Calu3 (cell line): ENCODE measurements at regions of chr9 and their contacts with region 1.

Region 1: GRCh38 chr9:88092797-88093331 is 45.4 kb downstream of the SPATA31C2 start:
- DNase-seq: no peak
- H3K4me3 Mint-ChIP-seq: no peak overlapping the region
- H3K27ac Mint-ChIP-seq: no peak overlapping the region
- H3K4me1 Mint-ChIP-seq: no peaks in the 10 kb centered on the region
- H3K27me3 Mint-ChIP-seq: no peaks in the 10 kb centered on the region
- CTCF ChIP-seq: no peak

Region 2: GRCh38 chr9:87834357-87834756 is 258.5 kb before region 1 on chr9:
- CTCF ChIA-PET with region 1: no interaction called
- intact Hi-C with region 1: no loop called
- DNase-seq: peak; percentile 74
- H3K4me3 Mint-ChIP-seq: peak overlapping the region; percentile 46
- H3K27ac Mint-ChIP-seq: no peak overlapping the region
- H3K4me1 Mint-ChIP-seq: no peaks in the 10 kb centered on the region
- H3K27me3 Mint-ChIP-seq: no peaks in the 10 kb centered on the region
- CTCF ChIP-seq: peak; percentile 59

Region 3: GRCh38 chr9:88072851-88073365 is 20.0 kb before region 1 on chr9:
- CTCF ChIA-PET with region 1: interaction called, 4 read pairs
- intact Hi-C with region 1: loop called (anchors 2 kb)
- DNase-seq: no peak
- H3K4me3 Mint-ChIP-seq: no peak overlapping the region
- H3K27ac Mint-ChIP-seq: no peak overlapping the region
- H3K4me1 Mint-ChIP-seq: peaks cover 21% of the 10 kb centered on the region
- H3K27me3 Mint-ChIP-seq: no peaks in the 10 kb centered on the region
- CTCF ChIP-seq: no peak

Region 4: GRCh38 chr9:88280816-88281382 is 188.0 kb after region 1 on chr9:
- CTCF ChIA-PET with region 1: no interaction called
- intact Hi-C with region 1: no loop called
- DNase-seq: peak; percentile 16
- H3K4me3 Mint-ChIP-seq: no peak overlapping the region
- H3K27ac Mint-ChIP-seq: peak overlapping the region; percentile 29
- H3K4me1 Mint-ChIP-seq: peaks cover 15% of the 10 kb centered on the region
- H3K27me3 Mint-ChIP-seq: no peaks in the 10 kb centered on the region
- CTCF ChIP-seq: no peak

Region 5: DNA sequence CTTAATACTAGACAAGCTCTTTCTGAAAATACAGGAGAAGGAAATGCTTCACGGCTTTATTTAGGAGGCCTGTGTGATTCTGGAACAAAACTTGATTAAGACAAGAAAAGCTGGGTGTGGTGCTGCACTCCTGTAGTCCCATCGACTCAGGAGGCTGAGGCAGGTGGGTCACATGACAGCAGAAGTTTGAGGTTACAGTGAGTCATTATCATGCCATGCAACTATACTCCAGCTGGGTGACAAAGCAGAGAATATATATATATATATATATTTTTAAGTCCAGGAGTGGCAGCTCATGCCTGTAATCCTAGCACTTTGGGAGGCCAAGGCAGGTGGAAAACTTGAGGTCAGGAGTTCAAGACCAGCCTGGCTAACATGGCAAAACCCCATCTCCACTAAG is 262.3 kb after region 1 on chr9:
- CTCF ChIA-PET with region 1: no interaction called
- intact Hi-C with region 1: no loop called
- DNase-seq: peak; percentile 62
- H3K4me3 Mint-ChIP-seq: no peak overlapping the region
- H3K27ac Mint-ChIP-seq: peak overlapping the region; percentile 50
- H3K4me1 Mint-ChIP-seq: no peaks in the 10 kb centered on the region
- H3K27me3 Mint-ChIP-seq: no peaks in the 10 kb centered on the region
- CTCF ChIP-seq: no peak